Activated CD8-positive, alpha-beta T cell treated with anti-CD3 and anti-CD28 coated beads for 36 hours (primary cell): ENCODE measurements at regions of chr3 and their contacts with region 1.

Region 1: GRCh38 chr3:136042608-136043221 is 77.2 kb downstream of the PPP2R3A start:
- DNase-seq: no peak
- ATAC-seq: no peak
- H3K4me3 Mint-ChIP-seq: no peak overlapping the region
- H3K27ac Mint-ChIP-seq: no peak overlapping the region
- H3K4me1 Mint-ChIP-seq: no peaks in the 10 kb centered on the region
- H3K27me3 Mint-ChIP-seq: peaks cover 6% of the 10 kb centered on the region
- CTCF ChIP-seq: peak; percentile 78

Region 2: DNA sequence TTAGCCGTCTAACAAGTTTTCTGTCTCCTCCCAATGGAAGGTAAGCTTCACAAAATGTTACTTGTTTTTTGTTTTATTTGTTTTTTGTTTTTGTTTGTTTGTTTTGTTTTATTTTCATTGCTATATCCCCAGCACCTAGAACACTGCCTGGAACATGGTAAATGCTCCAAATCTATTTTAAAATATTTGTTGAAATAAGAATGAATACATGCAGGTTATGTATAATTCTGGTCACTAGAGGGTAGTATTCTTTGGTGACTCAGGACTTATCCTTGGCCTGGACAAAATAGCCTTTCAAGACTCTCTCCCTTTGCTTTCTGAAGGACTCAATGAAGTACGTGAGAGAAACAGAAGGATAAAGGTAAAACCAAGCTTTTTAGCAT is 124.1 kb before region 1 on chr3:
- CTCF ChIA-PET with region 1: interaction called, 11 read pairs
- POLR2A ChIA-PET with region 1: interaction called, 3 read pairs
- intact Hi-C with region 1: loop called (anchors 5 kb)
- DNase-seq: no peak
- ATAC-seq: no peak
- H3K4me3 Mint-ChIP-seq: no peak overlapping the region
- H3K27ac Mint-ChIP-seq: no peak overlapping the region
- H3K4me1 Mint-ChIP-seq: no peaks in the 10 kb centered on the region
- H3K27me3 Mint-ChIP-seq: peaks cover 2% of the 10 kb centered on the region
- CTCF ChIP-seq: no peak

Region 3: GRCh38 chr3:136018876-136019275 is 23.8 kb before region 1 on chr3:
- CTCF ChIA-PET with region 1: interaction called, 22 read pairs
- POLR2A ChIA-PET with region 1: no interaction called
- intact Hi-C with region 1: no loop called
- DNase-seq: no peak
- ATAC-seq: no peak
- H3K4me3 Mint-ChIP-seq: no peak overlapping the region
- H3K27ac Mint-ChIP-seq: no peak overlapping the region
- H3K4me1 Mint-ChIP-seq: no peaks in the 10 kb centered on the region
- H3K27me3 Mint-ChIP-seq: peaks cover 7% of the 10 kb centered on the region
- CTCF ChIP-seq: no peak